Activated T-helper 1 cell treated with anti-CD3 and anti-CD28 coated beads, Interleukin-12 subunit alpha, Interleukin-12 subunit beta, Interleukin-2, Interleukin-4 antibody, amounts not matched to agents 30 ng/mL and 10 ng/mL and 1 ng/mL, durations not matched to agents 14 hours and 24 hours and 36 hours (primary cell): ENCODE measurements at regions of chr9 and their contacts with region 1.

Region 1: GRCh38 chr9:132901856-132902831 is 23.4 kb downstream of the SPACA9 start:
- DNase-seq: peak; percentile 72
- H3K4me3 Mint-ChIP-seq: no peak overlapping the region
- H3K27ac Mint-ChIP-seq: no peak overlapping the region
- H3K4me1 Mint-ChIP-seq: peaks cover 8% of the 10 kb centered on the region
- H3K27me3 Mint-ChIP-seq: no peaks in the 10 kb centered on the region

Region 2: DNA sequence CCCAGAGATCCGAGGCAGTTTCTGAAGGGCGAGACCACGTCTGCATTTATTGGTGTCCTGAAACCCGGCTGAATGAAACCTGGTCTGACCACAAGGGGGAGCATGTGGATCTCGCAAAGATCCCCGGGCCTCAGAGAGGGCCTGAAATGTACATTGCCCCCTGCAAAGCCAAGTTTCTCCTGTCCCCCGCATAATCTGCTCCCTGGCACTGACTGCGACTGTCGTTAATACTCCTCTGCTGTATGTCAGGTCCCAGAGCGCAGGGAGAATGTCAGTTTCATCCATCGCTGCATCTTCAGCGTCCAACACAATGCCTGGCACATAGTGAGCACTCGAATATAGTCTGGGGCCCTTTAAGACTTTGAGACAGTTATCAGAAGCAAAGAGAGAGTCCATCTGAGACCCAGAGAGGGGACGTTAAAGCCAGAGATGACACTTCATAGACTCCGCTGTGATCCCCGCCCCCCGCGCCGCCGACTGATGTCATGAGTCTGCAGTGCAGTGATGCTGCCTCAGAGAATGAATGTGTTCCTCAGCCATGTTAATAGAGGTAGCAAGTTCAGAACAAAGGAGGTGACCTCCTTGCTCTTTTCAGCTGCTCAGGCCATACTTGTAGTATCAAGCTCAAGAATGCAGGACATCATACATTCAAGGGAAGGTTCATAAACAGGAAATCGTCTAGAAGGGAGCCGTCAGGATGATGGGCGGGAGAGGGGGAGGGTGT is 394.2 kb before region 1 on chr9:
- intact Hi-C with region 1: loop called (anchors 5 kb)
- DNase-seq: peak; percentile 47
- H3K4me3 Mint-ChIP-seq: no peak overlapping the region
- H3K27ac Mint-ChIP-seq: no peak overlapping the region
- H3K4me1 Mint-ChIP-seq: peaks cover 14% of the 10 kb centered on the region
- H3K27me3 Mint-ChIP-seq: peaks cover 6% of the 10 kb centered on the region

Region 3: DNA sequence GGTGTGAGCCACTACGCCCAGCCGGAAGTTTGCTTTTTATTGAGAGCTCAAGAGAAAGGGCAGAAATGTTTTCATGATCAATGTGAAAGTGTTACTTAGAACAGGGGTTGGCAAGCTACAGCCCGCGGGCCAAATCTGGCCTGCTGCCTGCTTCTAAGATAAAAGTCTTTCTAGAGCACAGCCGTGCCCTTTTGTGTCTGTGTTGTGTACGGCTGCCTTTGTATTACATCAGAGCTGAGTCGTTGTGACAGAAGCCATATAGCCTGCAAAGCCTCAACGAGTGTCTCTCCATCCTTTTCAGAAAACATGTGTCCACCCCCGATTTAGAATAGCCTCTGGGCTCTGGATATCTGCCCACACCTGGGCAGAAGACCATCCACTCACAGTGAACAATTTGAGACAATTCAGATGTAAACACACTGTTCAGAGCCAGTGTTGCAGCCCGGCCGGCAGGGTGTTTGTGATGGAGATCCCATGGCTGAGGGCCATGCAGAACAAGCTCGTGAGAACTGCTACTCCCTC is 52.9 kb before region 1 on chr9:
- intact Hi-C with region 1: loop called (anchors 1 kb)
- DNase-seq: no peak
- H3K4me3 Mint-ChIP-seq: peak overlapping the region; percentile 56
- H3K27ac Mint-ChIP-seq: peak overlapping the region; percentile 23
- H3K4me1 Mint-ChIP-seq: peaks cover 22% of the 10 kb centered on the region
- H3K27me3 Mint-ChIP-seq: peaks cover 4% of the 10 kb centered on the region

Region 4: GRCh38 chr9:132862533-132862932 is 39.6 kb before region 1 on chr9:
- intact Hi-C with region 1: no loop called
- DNase-seq: no peak
- H3K4me3 Mint-ChIP-seq: no peak overlapping the region
- H3K27ac Mint-ChIP-seq: no peak overlapping the region
- H3K4me1 Mint-ChIP-seq: peaks cover 9% of the 10 kb centered on the region
- H3K27me3 Mint-ChIP-seq: peaks cover 2% of the 10 kb centered on the region

Region 5: DNA sequence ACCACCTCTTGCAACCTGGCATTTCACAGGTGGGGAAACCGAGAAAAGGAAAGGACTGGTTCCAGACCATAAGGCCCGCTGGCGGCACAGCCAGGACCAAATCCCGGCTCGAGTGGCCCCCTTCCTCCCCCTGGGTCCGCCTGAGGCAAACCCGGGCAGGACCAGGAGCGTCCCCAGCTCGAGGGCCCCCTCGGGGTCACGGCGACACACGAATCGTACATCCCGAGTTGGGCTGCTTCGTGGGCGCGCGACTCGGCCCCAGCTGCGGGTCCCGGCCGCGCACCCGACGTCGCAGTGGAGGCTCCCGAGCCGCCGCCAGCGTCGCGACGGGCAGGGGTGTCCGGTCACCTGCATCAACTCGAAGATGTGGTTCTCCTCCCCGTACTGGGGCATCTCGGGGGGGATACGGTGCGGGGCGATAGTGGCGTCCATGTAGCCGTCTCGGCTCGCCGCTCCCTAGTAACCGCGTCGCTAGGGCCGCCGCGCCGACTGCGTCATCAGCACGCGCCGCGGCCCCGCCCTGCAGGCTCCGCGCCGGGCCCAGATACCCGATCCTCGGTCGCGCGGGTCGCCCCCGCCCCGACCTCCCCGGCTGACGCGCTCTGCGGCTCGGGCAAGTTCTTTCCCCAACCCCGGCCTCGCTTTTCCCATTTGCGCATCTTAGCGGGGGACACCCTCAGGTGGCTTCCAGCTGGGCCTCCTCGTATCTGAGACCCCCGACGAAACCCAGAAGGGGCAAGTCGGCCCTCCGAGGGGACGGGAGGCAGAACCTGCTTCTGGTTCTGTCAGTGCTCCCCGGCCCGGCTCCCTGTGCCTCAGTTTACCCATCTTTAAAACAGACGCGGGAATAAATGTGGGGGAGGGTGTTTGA is 24.1 kb before region 1 on chr9 and contains the start of gene AK8:
- intact Hi-C with region 1: loop called (anchors 1 kb)
- DNase-seq: peak; percentile 75
- H3K4me3 Mint-ChIP-seq: peak within 1 kb of the TSS; percentile 84
- H3K27ac Mint-ChIP-seq: peak within 1 kb of the TSS; percentile 68
- H3K4me1 Mint-ChIP-seq: peaks cover 27% of the 10 kb centered on the region
- H3K27me3 Mint-ChIP-seq: peaks cover 9% of the 10 kb centered on the region
- total RNA-seq, gene AK8: not detected in 2 replicates

Region 6: DNA sequence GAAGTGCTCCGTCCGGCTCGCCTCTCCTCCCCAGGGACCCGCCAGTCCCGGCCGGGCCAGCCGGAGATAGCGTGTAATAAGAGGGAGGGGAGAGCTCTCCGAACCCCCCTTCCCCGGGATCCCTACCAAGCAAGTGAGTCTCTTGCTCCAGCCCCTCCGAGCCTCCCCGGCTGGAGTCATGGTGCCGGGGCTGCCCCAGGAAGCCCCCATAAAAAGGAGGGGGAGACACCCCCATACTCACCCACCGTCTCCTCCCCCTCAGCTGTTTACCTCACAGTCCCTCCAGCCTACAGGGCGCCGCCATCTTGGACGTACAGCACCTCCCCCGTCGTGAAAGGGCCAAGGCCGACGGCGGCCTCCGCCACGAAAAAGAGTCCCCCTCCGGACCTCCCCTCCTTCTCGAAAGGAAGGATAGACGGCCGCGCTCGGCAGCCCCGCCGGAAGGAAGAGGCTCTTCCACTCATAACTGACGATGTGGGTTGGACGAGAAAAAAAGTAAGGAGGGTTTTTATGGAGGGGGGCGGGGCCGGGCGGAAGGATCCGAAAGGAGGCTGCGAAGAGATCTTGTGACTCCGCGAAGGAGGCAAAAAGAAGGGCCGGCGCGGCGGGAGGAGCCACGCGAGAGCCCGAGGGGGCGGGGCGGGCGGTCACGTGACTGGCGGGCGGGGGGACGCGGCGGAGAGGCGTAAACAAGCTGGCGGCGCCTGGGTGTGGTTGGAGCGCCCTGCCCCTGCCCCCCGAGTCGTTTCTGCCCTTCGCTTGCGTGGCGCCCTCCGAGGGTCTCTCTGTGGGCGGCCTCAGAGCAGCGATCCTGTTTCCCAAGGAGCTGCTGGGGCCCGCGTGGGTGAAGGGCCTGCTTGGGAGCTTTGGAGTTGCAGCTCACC is 42.4 kb after region 1 on chr9 and contains the start of gene TSC1:
- intact Hi-C with region 1: loop called (anchors 1 kb)
- DNase-seq: peak; percentile 93
- H3K4me3 Mint-ChIP-seq: peak within 1 kb of the TSS; percentile 94
- H3K27ac Mint-ChIP-seq: peak within 1 kb of the TSS; percentile 99
- H3K4me1 Mint-ChIP-seq: peaks cover 23% of the 10 kb centered on the region
- H3K27me3 Mint-ChIP-seq: peaks cover 2% of the 10 kb centered on the region
- total RNA-seq, gene TSC1: 30.2 and 34.8 TPM in 2 replicates

Region 7: GRCh38 chr9:132969783-132970182 is 67.6 kb after region 1 on chr9:
- intact Hi-C with region 1: no loop called
- DNase-seq: no peak
- H3K4me3 Mint-ChIP-seq: no peak overlapping the region
- H3K27ac Mint-ChIP-seq: no peak overlapping the region
- H3K4me1 Mint-ChIP-seq: no peaks in the 10 kb centered on the region
- H3K27me3 Mint-ChIP-seq: peaks cover 11% of the 10 kb centered on the region